ENCODE measurements at regions of chr7 and their contacts with region 1.

Region 1: GRCh38 chr7:8190119-8190895 is 71.7 kb downstream of the ICA1 start:
- H3K4me3 Mint-ChIP-seq: no peak overlapping the region
- H3K27ac Mint-ChIP-seq: no peak overlapping the region
- H3K4me1 Mint-ChIP-seq: peaks cover 11% of the 10 kb centered on the region
- H3K27me3 Mint-ChIP-seq: no peaks in the 10 kb centered on the region

Region 2: DNA sequence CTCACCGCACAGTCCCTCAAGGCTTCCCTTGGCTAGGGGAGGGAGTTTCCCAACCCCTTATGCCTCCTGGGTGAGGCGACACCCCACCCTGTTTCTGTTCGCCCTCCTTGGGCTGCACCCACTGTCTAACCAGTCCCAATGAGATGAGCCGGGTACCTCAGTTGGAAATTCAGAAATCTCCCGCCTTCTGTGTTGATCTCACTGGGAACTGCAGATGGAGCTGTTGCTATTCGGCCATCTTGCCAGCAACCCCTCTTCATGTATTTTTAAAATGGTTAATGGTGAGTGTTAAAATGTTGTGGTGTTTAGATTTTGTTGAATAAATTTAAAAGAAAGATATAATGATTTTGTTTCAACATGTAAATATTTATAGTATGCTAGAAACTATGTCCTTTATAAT is 527.8 kb before region 1 on chr7:
- intact Hi-C with region 1: loop called (anchors 5 kb)
- H3K4me3 Mint-ChIP-seq: no peak overlapping the region
- H3K27ac Mint-ChIP-seq: no peak overlapping the region
- H3K4me1 Mint-ChIP-seq: peaks cover 29% of the 10 kb centered on the region
- H3K27me3 Mint-ChIP-seq: no peaks in the 10 kb centered on the region